ENCODE measurements at regions of chr3 and their contacts with region 1.

Region 1: GRCh38 chr3:173529067-173529711 is 131.6 kb downstream of the NLGN1 start:
- DNase-seq: no peak
- H3K4me3 ChIP-seq: no peak overlapping the region
- H3K27ac ChIP-seq: no peak overlapping the region
- H3K4me1 ChIP-seq: no peaks in the 10 kb centered on the region
- H3K27me3 ChIP-seq: no peaks in the 10 kb centered on the region
- CTCF ChIP-seq: peak in 4 of 5 experiments; percentile 9 to 38 (median 23)
- EP300 ChIP-seq: no peak
- POLR2A ChIP-seq: no peak

Region 2: GRCh38 chr3:173439004-173439403 is 90.2 kb before region 1 on chr3:
- in situ Hi-C with region 1: loop called in 1 of 4 experiments (anchors 25 kb)
- intact Hi-C with region 1: no loop called
- DNase-seq: no peak
- H3K4me3 ChIP-seq: no peak overlapping the region
- H3K27ac ChIP-seq: no peak overlapping the region
- H3K4me1 ChIP-seq: no peaks in the 10 kb centered on the region
- H3K27me3 ChIP-seq: no peaks in the 10 kb centered on the region
- CTCF ChIP-seq: no peak
- EP300 ChIP-seq: no peak
- POLR2A ChIP-seq: no peak

Measured in transverse colon (tissue), 4 donors.